Activated B cell treated with CpG ODN at 0.5 μM for 24 hours (primary cell): ENCODE measurements at regions of chr3 and their contacts with region 1.

Region 1: DNA sequence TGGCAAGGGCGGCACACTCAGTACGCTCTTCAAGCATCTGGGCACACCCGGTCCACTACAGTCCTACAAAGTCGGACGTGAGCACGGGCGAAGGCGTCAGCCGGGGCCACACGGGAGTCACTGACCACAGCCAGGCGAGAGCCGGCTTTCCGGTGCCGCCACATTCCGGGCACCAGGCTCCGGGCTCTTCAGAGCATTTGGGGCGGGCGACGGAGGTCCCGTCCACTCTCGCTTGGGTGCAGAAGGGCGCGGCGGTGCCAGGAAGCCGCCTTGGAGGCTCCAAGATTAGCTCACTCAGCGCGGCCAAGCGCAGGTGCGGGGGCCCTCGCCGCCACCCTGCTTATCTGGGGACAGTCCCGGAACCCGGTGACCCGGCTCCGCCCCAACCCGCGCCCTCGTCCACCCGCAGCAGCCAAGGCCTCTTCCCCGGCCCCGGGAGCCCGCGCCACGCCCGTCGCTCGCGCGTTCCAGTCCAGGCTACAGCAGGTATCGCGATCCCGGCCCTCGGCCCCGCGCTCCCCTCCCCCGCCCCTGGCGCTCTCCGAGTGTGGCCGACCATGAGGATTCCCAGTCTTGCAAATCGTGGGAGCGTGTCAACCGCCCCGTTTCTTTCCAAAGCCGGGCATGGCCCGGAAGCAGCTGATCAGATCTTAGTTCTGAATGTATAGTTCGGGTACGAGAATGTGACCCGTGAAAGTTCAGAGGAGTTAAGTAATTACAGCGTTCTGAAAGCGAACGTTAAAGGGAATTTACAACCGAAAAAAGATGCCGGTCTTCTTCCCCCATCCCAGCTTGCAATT is at the start of gene ADPRH:
- DNase-seq: peak; percentile 76
- ATAC-seq: peak; percentile 76
- H3K4me3 Mint-ChIP-seq: peak within 1 kb of the TSS; percentile 97
- H3K27ac Mint-ChIP-seq: peak within 1 kb of the TSS; percentile 99
- H3K4me1 Mint-ChIP-seq: peaks cover 37% of the 10 kb centered on the region
- H3K27me3 Mint-ChIP-seq: no peaks in the 10 kb centered on the region
- CTCF ChIP-seq: no peak
- total RNA-seq, gene ADPRH: 41.2 and 43.8 TPM in 2 replicates

Region 2: DNA sequence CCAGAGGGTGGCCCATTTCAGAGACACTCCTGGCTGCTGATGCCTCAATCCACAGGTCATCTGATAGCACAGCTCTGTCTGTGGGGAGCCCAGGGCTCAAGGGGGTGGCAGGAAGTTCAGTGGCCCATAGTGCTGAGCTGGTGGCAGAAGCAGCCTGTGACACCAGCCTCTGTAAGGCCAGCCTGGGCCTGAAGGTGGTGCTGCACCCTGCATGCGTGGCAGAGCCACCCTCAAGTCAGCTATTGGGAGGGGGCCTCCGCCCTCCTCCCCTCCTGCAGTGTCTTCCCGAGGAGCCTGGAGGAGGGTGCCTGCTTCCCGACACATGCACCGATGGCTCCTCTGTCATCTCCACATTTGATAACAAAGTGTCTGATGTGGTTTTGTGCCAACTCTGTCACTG is 21.2 kb after region 1 on chr3:
- CTCF ChIA-PET with region 1: no interaction called
- POLR2A ChIA-PET with region 1: interaction called, 3 read pairs
- intact Hi-C with region 1: loop called (anchors 2 kb)
- DNase-seq: no peak
- ATAC-seq: peak; percentile 87
- H3K4me3 Mint-ChIP-seq: no peak overlapping the region
- H3K27ac Mint-ChIP-seq: no peak overlapping the region
- H3K4me1 Mint-ChIP-seq: peaks cover 46% of the 10 kb centered on the region
- H3K27me3 Mint-ChIP-seq: no peaks in the 10 kb centered on the region
- CTCF ChIP-seq: no peak

Region 3: DNA sequence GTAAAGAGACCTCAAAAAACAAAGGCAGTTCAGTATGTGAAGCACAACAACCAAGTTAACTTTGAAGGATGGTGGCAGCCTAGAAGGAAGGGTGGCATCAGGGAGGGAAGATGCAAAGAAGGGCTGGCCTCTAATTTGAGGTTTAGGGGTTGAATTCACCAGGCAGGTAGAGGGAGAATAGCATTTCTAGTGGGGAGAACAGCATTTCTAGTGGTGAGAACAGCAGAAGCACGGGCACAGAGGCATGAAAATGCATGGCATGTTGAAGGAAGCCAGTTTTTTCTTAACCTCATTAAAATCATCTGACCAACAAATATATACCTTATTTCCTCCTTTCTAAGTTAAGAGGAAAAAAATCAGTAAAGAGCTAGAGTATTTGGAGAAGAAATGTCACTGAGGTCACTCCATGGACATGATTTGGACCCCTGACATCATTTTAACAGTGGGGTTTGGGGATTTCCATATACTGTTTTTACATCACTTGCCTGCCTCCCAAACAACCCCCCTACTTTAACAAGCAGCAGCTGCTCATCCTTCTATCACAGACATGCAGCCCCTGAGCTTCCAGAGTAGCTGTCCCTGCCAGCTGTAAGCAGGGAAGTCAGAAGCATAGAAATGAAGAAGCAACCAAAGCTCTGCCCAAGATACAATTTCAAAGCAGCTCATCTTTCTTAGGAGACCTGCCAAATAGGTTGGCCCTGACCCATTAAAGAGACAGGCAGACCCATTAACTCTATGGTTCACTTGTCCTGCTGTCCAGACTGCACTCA is 83.2 kb after region 1 on chr3:
- CTCF ChIA-PET with region 1: no interaction called
- POLR2A ChIA-PET with region 1: interaction called, 12 read pairs
- intact Hi-C with region 1: no loop called
- DNase-seq: no peak
- ATAC-seq: no peak
- H3K4me3 Mint-ChIP-seq: no peak overlapping the region
- H3K27ac Mint-ChIP-seq: peak overlapping the region; percentile 67
- H3K4me1 Mint-ChIP-seq: peaks cover 68% of the 10 kb centered on the region
- H3K27me3 Mint-ChIP-seq: no peaks in the 10 kb centered on the region
- CTCF ChIP-seq: no peak